ENCODE measurements at regions of chr5 and their contacts with region 1.

Region 1: DNA sequence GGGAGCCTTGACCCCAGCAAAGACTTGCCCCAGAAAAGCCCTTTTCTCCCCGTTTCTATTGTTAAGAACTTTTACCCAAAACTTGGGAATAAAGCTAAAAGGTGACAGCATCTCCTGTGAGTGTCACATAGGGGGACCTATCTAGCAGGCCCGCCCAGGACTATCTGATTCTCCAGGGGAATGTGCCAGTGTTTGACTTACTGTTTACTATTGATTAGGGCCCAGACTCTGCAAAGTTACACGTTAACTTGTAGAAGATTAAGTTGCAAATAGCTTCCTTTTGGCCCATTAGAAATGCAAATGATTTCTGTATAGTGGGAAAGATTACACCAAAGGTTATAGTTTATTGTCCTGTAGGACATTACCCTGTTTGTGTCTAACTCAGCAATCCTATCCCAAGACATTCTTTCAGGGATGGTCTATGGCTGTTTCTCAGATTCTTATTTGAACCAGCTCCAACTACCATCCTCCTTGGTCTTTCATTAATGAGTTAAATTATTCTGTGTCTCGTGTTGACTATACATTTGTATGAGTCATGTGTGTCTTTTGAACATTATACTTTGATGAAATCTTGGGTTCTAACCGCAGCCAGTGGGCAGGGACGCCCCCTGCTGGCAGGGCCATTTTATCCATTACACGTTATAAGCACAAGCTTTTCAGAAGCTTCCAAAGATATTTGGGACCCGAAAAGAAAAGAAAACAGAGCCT is 60.7 kb downstream of the HRH2 start:
- DNase-seq: peak; percentile 55
- H3K4me3 Mint-ChIP-seq: no peak overlapping the region
- H3K27ac Mint-ChIP-seq: no peak overlapping the region
- H3K4me1 Mint-ChIP-seq: no peaks in the 10 kb centered on the region
- H3K27me3 Mint-ChIP-seq: peaks cover 38% of the 10 kb centered on the region
- CTCF ChIP-seq: peak; percentile 72

Region 2: GRCh38 chr5:175526691-175527090 is 191.9 kb before region 1 on chr5:
- CTCF ChIA-PET with region 1: interaction called, 91 read pairs
- POLR2A ChIA-PET with region 1: no interaction called
- intact Hi-C with region 1: no loop called
- DNase-seq: no peak
- H3K4me3 Mint-ChIP-seq: no peak overlapping the region
- H3K27ac Mint-ChIP-seq: no peak overlapping the region
- H3K4me1 Mint-ChIP-seq: no peaks in the 10 kb centered on the region
- H3K27me3 Mint-ChIP-seq: no peaks in the 10 kb centered on the region
- CTCF ChIP-seq: no peak

Region 3: GRCh38 chr5:175542232-175542965 is 176.2 kb before region 1 on chr5:
- CTCF ChIA-PET with region 1: interaction called, 91 read pairs
- POLR2A ChIA-PET with region 1: interaction called, 3 read pairs
- intact Hi-C with region 1: no loop called
- DNase-seq: peak; percentile 57
- H3K4me3 Mint-ChIP-seq: no peak overlapping the region
- H3K27ac Mint-ChIP-seq: no peak overlapping the region
- H3K4me1 Mint-ChIP-seq: no peaks in the 10 kb centered on the region
- H3K27me3 Mint-ChIP-seq: peaks cover under 1% of the 10 kb centered on the region
- CTCF ChIP-seq: no peak

Region 4: DNA sequence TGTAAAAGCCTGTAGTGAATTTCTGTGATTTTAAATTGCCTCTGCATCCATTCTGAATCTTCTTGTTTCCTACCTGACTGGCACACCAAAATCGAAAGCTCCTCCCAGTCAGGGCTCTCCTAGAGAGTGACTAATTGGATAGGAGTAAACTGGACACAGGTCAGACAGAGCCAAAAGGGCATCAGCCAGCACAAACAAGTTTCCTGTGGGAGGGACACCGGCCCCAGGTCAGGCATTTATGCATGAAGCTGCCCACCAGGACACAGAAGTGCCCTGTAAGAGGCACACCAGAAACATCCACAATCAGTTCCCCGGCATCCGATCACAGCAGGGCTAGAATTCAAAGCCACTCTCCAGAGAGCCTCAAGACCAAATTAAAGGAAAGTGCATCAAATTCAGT is 161.8 kb before region 1 on chr5:
- CTCF ChIA-PET with region 1: no interaction called
- POLR2A ChIA-PET with region 1: no interaction called
- intact Hi-C with region 1: no loop called
- DNase-seq: no peak
- H3K4me3 Mint-ChIP-seq: no peak overlapping the region
- H3K27ac Mint-ChIP-seq: no peak overlapping the region
- H3K4me1 Mint-ChIP-seq: no peaks in the 10 kb centered on the region
- H3K27me3 Mint-ChIP-seq: peaks cover 42% of the 10 kb centered on the region
- CTCF ChIP-seq: no peak

Region 5: GRCh38 chr5:175696139-175696854 is 22.3 kb before region 1 on chr5:
- CTCF ChIA-PET with region 1: interaction called, 14 read pairs
- POLR2A ChIA-PET with region 1: no interaction called
- intact Hi-C with region 1: no loop called
- DNase-seq: peak; percentile 60
- H3K4me3 Mint-ChIP-seq: no peak overlapping the region
- H3K27ac Mint-ChIP-seq: no peak overlapping the region
- H3K4me1 Mint-ChIP-seq: no peaks in the 10 kb centered on the region
- H3K27me3 Mint-ChIP-seq: peaks cover 33% of the 10 kb centered on the region
- CTCF ChIP-seq: peak; percentile 48

Region 6: DNA sequence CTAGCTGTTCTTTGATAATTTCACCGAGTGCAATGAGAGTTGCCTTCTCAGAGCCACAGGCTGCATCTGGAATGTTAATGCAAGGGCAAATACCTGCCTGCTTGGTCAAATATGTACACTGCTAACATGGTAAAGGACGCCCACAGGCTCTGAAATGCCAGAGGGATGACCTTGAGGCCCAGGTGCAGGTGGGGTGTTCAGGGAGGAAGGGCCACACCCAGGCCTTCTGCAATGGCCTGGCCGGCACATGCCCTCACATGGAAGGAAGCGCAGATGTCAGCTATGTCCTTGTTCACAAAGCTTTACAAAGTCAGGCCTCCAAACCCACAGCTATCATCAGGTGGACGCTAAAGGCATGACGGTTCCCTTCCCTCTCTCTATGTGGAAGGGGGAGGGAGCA is 12.1 kb before region 1 on chr5:
- CTCF ChIA-PET with region 1: interaction called, 15 read pairs
- POLR2A ChIA-PET with region 1: no interaction called
- intact Hi-C with region 1: no loop called
- DNase-seq: no peak
- H3K4me3 Mint-ChIP-seq: no peak overlapping the region
- H3K27ac Mint-ChIP-seq: no peak overlapping the region
- H3K4me1 Mint-ChIP-seq: no peaks in the 10 kb centered on the region
- H3K27me3 Mint-ChIP-seq: peaks cover 74% of the 10 kb centered on the region
- CTCF ChIP-seq: no peak

Measured in MCF 10A (cell line).